Activated CD4-positive, alpha-beta T cell treated with anti-CD3 and anti-CD28 coated beads for 36 hours (primary cell): ENCODE measurements at regions of chr12 and their contacts with region 1.

Region 1: DNA sequence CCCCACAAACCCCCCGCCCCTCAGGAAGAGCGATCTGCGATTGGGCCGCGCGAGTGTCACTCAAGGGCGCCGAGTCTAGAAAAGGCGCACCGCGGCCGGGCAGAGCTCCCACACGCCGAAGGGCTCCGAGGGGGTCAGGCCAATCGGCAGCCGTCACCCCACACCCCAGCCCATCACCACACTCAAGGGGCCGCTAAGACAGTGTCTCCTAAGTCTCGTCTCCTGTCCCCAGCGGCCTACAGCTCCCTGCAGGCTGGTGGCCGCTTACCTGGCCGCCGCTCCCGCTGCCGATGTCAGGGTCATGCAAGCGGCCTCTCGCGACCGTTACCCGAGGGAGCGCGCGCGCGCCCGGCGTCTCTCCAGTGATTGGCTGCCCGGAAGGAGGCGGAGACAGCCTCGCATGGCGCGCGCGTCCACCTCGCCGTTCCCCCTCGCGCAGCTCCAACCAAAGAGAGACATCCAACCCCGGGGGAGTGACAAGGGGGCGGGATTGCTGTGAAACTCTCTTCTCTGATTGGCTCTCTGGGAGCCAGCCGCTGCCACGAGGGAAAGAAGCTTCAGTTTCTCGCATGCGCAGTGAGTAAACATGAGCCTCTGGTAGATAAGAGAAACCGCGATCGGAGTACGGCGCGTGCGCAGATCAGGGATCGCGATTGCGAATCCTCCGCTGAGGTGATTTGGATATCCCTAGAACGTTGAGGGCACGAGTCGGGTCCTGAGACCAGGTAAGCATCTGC is at the starts of genes MPHOSPH9 and MTRFR:
- DNase-seq: peak; percentile 99
- ATAC-seq: peak; percentile 91
- H3K4me3 Mint-ChIP-seq: peak within 1 kb of the TSS; percentile 90
- H3K27ac Mint-ChIP-seq: peak within 1 kb of the TSS; percentile 99
- H3K4me1 Mint-ChIP-seq: peaks cover 61% of the 10 kb centered on the region
- H3K27me3 Mint-ChIP-seq: no peaks in the 10 kb centered on the region
- total RNA-seq, gene MPHOSPH9: 94.0 to 128 TPM
- total RNA-seq, gene MTRFR: 31.1 to 34.7 TPM

Region 2: DNA sequence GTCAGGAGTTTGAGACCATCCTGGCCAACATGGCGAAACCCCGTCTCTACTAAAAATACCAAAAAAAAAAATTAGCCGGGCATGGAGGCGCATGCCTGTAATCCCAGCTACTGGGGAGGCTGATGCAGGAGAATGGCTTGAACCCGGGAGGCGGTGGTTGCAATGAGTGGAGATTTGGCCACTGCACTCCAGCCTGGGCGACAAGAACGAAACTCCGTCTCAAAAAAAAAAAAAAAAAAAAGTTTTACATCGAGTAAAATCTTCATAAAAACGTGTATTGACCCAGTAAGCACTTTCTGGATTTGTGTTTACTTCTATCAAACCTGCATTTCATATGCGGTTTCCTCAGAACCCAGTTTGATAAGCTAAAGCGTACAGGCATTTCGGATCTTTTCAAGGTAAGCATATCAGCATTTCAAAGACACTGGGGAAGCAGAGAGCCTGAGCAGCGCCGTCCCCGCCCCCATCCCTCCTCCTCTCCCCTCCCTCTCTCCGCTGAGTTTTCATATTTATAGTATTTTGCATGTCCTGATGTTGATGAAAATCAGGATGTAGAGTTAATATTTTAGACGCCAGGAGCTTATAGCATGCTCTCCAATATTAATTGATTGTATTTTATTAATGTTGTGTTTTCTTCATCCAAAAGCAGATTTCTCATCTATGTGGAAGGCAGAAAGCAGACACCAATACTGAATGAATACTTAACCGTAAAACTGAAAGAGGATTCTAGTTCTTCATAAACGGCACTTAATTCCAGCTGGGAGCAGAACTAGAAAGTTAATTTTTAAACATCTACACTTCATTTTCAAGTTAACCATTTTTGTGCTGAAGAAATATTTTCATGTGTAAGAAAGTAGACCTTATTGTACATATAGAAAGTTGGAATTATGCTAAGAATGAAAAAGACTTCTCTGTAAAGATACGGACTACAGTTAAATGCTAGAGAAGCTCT is 406.9 kb before region 1 on chr12:
- CTCF ChIA-PET with region 1: no interaction called
- POLR2A ChIA-PET with region 1: no interaction called
- intact Hi-C with region 1: no loop called
- DNase-seq: peak; percentile 22
- ATAC-seq: no peak
- H3K4me3 Mint-ChIP-seq: no peak overlapping the region
- H3K27ac Mint-ChIP-seq: no peak overlapping the region
- H3K4me1 Mint-ChIP-seq: no peaks in the 10 kb centered on the region
- H3K27me3 Mint-ChIP-seq: peaks cover 4% of the 10 kb centered on the region

Region 3: DNA sequence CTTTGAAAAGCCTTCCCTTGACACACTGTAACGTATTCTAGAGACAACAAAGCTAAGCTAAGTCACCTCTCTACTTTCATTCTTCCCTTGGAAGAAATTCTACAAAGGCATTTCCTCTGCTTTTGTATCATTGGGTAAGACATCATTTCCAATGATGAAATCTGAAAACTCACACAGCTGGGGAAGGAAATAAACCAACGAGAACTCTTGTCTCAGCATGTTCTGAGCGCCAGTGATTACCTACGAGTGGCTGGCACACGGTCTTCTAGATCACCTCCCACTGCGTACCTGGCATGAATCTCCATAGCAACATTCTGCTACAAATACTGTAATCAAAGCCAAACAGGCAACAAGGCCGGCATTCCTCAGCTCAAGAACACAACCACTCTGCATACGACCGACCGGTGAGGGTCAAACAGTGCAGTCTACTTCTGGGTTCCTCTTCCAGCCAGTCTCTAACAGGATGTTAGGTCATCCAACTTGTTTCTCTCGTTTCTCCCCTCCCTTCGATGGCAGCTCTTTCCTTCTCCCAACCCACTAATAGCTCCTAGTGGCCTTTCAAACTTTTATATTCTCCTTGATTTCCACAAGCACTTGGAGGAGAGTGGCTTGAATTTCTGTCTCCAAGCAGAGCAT is 344.6 kb before region 1 on chr12:
- CTCF ChIA-PET with region 1: interaction called, 5 read pairs
- POLR2A ChIA-PET with region 1: no interaction called
- intact Hi-C with region 1: loop called in 1 of 2 experiments (anchors 10 kb)
- DNase-seq: peak; percentile 67
- ATAC-seq: peak; percentile 78
- H3K4me3 Mint-ChIP-seq: peak overlapping the region; percentile 66
- H3K27ac Mint-ChIP-seq: peak overlapping the region; percentile 90
- H3K4me1 Mint-ChIP-seq: peaks cover 78% of the 10 kb centered on the region
- H3K27me3 Mint-ChIP-seq: peaks cover 8% of the 10 kb centered on the region

Region 4: GRCh38 chr12:122980183-122981046 is 252.6 kb before region 1 on chr12 and contains the start of gene ARL6IP4:
- CTCF ChIA-PET with region 1: interaction called, 3 read pairs
- POLR2A ChIA-PET with region 1: interaction called, 9 read pairs
- intact Hi-C with region 1: loop called in 1 of 2 experiments (anchors 1 kb)
- DNase-seq: peak; percentile 82
- ATAC-seq: peak; percentile 77
- H3K4me3 Mint-ChIP-seq: peak within 1 kb of the TSS; percentile 87
- H3K27ac Mint-ChIP-seq: peak within 1 kb of the TSS; percentile 85
- H3K4me1 Mint-ChIP-seq: peaks cover 55% of the 10 kb centered on the region
- H3K27me3 Mint-ChIP-seq: no peaks in the 10 kb centered on the region
- total RNA-seq, gene ARL6IP4: 141 to 163 TPM

Region 5: DNA sequence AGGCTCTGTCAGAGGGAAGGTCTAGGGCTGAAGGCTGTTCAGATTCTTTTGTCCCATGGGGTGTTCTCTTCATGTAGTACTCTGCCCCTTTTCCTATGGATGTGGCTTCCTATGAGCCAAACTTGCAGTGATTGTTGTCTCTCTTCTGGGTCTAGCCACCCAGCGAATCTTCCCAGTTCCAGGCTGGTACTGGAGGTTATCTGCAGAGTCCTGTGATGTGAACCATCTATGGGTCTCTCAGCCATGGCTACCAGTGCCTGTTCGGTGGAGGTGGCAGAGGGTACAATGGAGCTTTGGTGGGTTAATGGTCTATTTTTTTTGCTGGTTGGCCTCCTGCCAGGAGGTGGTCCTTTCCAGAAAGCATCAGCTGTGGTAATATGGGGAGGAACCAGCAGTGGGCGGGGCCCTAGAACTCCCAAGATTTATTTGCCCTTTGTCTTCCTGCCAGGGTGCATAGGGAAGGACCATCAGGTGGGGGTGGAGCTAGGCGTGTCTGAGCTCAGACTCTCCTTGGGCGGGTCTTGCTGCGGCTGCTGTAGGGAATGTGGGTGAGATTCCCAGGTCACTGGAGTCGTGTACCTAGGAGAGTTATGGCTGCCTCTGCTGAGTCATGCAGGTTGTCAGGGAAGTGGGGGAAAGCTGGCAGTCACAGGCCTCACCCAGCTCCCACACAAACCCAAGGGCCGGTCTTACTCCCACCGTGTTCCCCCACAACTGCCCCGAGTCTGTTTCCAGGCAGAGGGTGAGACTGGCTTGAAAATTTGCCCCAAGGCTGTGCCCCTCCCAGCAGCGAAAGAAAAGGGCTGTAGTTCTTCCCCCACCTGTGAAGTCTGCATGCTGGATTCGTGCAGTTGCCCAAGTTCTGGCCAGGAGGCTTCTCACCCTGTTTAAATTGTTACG is 17.8 kb after region 1 on chr12:
- CTCF ChIA-PET with region 1: interaction called, 24 read pairs
- POLR2A ChIA-PET with region 1: interaction called, 14 read pairs
- intact Hi-C with region 1: no loop called
- DNase-seq: peak; percentile 4
- ATAC-seq: no peak
- H3K4me3 Mint-ChIP-seq: no peak overlapping the region
- H3K27ac Mint-ChIP-seq: peak overlapping the region; percentile 72
- H3K4me1 Mint-ChIP-seq: peaks cover 63% of the 10 kb centered on the region
- H3K27me3 Mint-ChIP-seq: no peaks in the 10 kb centered on the region

Region 6: GRCh38 chr12:123329799-123330198 is 96.8 kb after region 1 on chr12:
- CTCF ChIA-PET with region 1: no interaction called
- POLR2A ChIA-PET with region 1: no interaction called
- intact Hi-C with region 1: no loop called
- DNase-seq: no peak
- ATAC-seq: no peak
- H3K4me3 Mint-ChIP-seq: no peak overlapping the region
- H3K27ac Mint-ChIP-seq: no peak overlapping the region
- H3K4me1 Mint-ChIP-seq: no peaks in the 10 kb centered on the region
- H3K27me3 Mint-ChIP-seq: no peaks in the 10 kb centered on the region

Region 7: GRCh38 chr12:123388177-123388947 is 155.4 kb after region 1 on chr12:
- CTCF ChIA-PET with region 1: interaction called, 7 read pairs
- POLR2A ChIA-PET with region 1: interaction called, 11 read pairs
- intact Hi-C with region 1: loop called in 1 of 2 experiments (anchors 1 kb)
- DNase-seq: peak; percentile 86
- ATAC-seq: peak; percentile 43
- H3K4me3 Mint-ChIP-seq: peak overlapping the region; percentile 76
- H3K27ac Mint-ChIP-seq: peak overlapping the region; percentile 81
- H3K4me1 Mint-ChIP-seq: peaks cover 35% of the 10 kb centered on the region
- H3K27me3 Mint-ChIP-seq: no peaks in the 10 kb centered on the region

Region 8: GRCh38 chr12:123601602-123602489 is 368.9 kb after region 1 on chr12 and contains the start of gene DDX55:
- CTCF ChIA-PET with region 1: no interaction called
- POLR2A ChIA-PET with region 1: interaction called, 3 read pairs
- intact Hi-C with region 1: loop called in 1 of 2 experiments (anchors 5 kb)
- DNase-seq: peak; percentile 93
- ATAC-seq: peak; percentile 95
- H3K4me3 Mint-ChIP-seq: peak within 1 kb of the TSS; percentile 85
- H3K27ac Mint-ChIP-seq: peak within 1 kb of the TSS; percentile 92
- H3K4me1 Mint-ChIP-seq: peaks cover 36% of the 10 kb centered on the region
- H3K27me3 Mint-ChIP-seq: no peaks in the 10 kb centered on the region
- total RNA-seq, gene DDX55: 44.3 to 49.4 TPM